ENCODE measurements at regions of chr10 and their contacts with region 1.

Region 1: GRCh38 chr10:19904193-19904661 is 88.0 kb downstream of the PLXDC2 start:
- DNase-seq: no peak
- H3K4me3 ChIP-seq: no peak overlapping the region
- H3K27ac ChIP-seq: no peak overlapping the region
- H3K4me1 ChIP-seq: peaks cover 0 to 3% of the 10 kb centered on the region in 2 donors
- H3K27me3 ChIP-seq: no peaks in the 10 kb centered on the region
- CTCF ChIP-seq: no peak
- POLR2A ChIP-seq: no peak

Region 2: GRCh38 chr10:19819419-19820033 is 84.7 kb before region 1 on chr10:
- intact Hi-C with region 1: loop called (anchors 5 kb)
- DNase-seq: no peak
- H3K4me3 ChIP-seq: peak overlapping the region; percentile 89 to 92 (median 90)
- H3K27ac ChIP-seq: peak overlapping the region; percentile 65 to 89
- H3K4me1 ChIP-seq: no peaks in the 10 kb centered on the region
- H3K27me3 ChIP-seq: no peaks in the 10 kb centered on the region
- CTCF ChIP-seq: peak; percentile 74 to 90 (median 88)
- POLR2A ChIP-seq: no peak

Region 3: DNA sequence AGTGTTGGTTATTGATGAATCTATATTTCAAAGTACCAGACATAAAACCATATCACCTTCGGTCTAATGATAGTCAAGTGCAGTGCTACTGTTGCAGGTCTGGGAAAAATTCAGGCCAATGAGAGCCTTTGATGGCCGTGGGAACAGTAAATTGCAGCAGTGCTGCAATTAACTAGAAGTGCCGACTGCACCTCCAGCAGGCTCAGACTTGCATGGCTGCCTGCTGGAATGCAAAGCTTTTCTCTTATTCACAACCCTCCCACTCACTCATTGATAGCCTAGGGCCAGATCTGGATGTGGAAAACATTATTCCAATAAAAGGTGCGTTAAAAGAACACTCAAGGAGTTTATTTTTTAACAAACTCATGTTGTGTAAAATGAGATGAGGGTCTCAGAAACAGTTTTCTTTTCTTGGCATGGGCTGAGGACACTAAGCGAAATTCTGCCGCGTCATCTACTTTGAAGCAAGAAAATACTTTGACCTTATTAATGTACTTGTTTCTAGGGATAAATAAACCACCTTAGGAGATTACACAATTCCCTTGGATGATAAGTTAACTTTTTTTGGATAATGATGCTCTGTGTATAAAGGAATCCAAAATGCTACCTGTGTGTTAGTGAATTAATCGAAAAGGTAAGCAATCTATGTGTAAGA is 70.9 kb before region 1 on chr10:
- intact Hi-C with region 1: no loop called
- DNase-seq: peak in 1 of 2 donors; percentile 83
- H3K4me3 ChIP-seq: peak overlapping the region in 2 of 3 donors; percentile 7 to 39
- H3K27ac ChIP-seq: peak overlapping the region; percentile 54 to 75
- H3K4me1 ChIP-seq: peaks cover 3 to 17% of the 10 kb centered on the region in 2 donors
- H3K27me3 ChIP-seq: no peaks in the 10 kb centered on the region
- CTCF ChIP-seq: no peak
- POLR2A ChIP-seq: no peak